Tibial artery (tissue), 4 donors: ENCODE measurements at regions of chr3 and their contacts with region 1.

Region 1: DNA sequence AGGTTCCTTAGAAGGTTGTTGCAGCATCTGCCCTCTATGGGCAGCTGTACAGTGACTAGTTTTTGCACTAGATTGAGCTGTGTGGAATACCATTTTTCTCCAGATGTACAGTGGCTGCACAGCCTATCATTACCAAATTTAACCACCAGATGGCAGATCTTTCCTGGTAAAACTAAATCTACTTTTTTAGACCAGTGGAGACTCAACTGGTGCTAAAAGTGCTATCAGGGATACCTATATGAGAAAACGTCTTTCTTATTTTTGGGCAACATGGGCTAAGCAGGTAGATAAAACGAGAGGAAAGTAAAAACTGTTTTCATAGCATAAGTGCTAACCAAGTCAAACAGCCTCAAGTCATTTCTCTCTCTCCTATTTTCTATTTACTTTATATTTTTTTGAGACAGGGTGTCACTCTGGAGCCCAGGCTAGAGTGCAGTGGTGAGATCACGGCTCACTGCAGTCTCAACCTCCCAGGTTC is 21.2 kb downstream of the IGSF10 start:
- DNase-seq: no peak
- H3K4me3 ChIP-seq: no peak overlapping the region
- H3K27ac ChIP-seq: no peak overlapping the region
- H3K4me1 ChIP-seq: peaks cover 0 to 1% (median 0%) of the 10 kb centered on the region in 4 donors
- H3K27me3 ChIP-seq: no peaks in the 10 kb centered on the region
- CTCF ChIP-seq: peak; percentile 85

Region 2: DNA sequence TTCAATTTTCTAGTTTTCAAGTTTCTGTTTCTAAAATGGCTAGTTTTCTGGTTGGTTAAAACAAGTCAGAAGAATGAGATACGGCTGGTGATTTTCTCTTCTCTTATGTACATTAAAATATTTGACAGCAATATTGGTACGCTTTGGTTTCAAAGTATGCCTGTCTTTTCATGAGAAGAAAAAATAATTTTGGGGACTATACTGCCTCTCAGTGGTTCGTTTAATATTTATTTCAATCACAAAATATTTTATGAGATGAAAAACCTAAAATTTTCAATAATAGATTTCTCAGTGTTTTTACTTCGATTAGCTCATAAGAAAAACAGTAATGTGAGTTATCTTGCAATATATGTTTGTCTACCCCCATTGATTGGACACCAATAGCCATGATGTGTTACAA is 221.2 kb after region 1 on chr3:
- intact Hi-C with region 1: loop called (anchors 5 kb)
- DNase-seq: no peak
- H3K4me3 ChIP-seq: no peak overlapping the region
- H3K27ac ChIP-seq: no peak overlapping the region
- H3K4me1 ChIP-seq: no peaks in the 10 kb centered on the region
- H3K27me3 ChIP-seq: no peaks in the 10 kb centered on the region
- CTCF ChIP-seq: peak in 1 of 2 experiments; percentile 52

Region 3: DNA sequence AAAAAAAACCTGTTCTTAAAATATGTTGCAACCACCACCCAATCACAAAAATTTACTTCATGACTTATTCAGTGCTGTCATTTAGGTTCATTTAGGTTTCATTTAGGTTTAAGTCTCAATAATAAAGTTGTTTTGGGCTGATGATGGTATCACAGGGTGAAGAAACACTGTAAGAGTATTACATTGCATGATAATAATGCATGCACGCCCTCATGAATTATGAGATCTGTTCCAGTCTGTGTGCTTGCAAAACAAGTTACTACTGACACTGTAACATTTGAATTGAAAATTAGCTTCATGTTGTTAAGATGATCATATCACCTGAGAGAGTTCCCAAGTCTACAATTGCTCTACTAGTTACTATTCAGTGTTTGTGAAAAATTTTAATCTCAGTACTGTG is 293.9 kb after region 1 on chr3 and contains the start of gene AADACL2:
- intact Hi-C with region 1: no loop called
- DNase-seq: no peak
- H3K4me3 ChIP-seq: no peak within 1 kb of the TSS
- H3K27ac ChIP-seq: no peak within 1 kb of the TSS
- H3K4me1 ChIP-seq: no peaks in the 10 kb centered on the region
- H3K27me3 ChIP-seq: no peaks in the 10 kb centered on the region
- CTCF ChIP-seq: no peak

Region 4: DNA sequence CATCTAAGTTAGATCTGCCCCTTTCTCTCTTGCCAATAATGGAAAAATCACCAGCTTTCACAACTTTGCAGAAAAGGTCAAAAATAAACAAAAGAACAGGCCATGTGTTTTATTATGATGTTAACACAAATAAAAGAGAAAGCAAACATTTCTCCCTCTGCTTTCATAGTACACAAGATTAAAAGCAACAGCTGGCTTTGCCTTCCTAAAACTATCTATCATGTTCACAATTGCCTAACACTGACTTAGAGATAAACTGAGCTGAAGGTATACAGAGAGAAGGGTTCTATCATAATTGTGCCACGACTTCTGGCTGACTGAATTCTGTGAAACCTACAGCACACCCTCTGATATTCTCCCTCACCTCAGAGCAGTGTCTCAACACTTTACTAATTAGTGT is 403.6 kb after region 1 on chr3:
- intact Hi-C with region 1: loop called (anchors 5 kb)
- DNase-seq: no peak
- H3K4me3 ChIP-seq: no peak overlapping the region
- H3K27ac ChIP-seq: no peak overlapping the region
- H3K4me1 ChIP-seq: no peaks in the 10 kb centered on the region
- H3K27me3 ChIP-seq: no peaks in the 10 kb centered on the region
- CTCF ChIP-seq: no peak

Region 5: DNA sequence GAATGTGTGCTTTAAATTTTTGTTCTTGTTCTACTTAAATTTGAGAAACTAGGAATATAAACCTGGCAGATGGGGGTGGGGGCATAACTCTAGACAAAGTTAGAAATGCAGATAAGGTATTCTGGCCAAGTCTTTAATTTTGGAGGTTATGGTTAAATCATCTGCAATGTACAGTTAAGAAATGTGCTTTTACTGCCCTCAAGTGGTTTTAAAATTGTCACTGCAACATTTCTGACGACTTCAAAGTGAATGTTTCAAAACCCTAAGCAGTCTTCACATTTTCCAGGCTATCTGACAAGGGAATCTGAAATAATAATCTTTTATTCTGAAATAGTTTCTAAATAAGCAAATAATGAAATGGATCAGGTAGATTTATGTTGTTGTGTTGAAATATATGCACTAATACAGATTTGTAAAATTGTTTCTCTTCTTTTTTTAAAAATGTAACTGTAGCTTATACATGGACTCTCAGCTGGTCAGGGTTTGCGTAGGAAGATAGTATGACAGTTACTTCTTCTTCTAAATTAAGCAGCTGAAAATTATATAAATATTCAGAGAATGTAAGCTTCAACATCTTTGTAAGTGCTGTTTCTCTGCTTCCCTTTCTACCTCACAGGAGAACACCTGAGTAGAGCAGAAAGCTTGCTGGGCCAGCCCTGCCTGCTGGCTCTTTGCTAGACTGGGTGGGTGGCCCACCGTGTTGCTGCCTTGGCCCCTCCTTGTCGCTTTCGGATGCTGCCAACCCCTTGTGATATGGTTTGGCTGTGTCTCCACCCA is 478.8 kb after region 1 on chr3:
- intact Hi-C with region 1: loop called (anchors 10 kb)
- DNase-seq: no peak
- H3K4me3 ChIP-seq: no peak overlapping the region
- H3K27ac ChIP-seq: peak overlapping the region; percentile 4 to 26
- H3K4me1 ChIP-seq: peaks cover 0 to 9% (median 0%) of the 10 kb centered on the region in 4 donors
- H3K27me3 ChIP-seq: no peaks in the 10 kb centered on the region
- CTCF ChIP-seq: peak; percentile 48 to 62